ENCODE measurements at regions of chr19 and their contacts with region 1.

Region 1: DNA sequence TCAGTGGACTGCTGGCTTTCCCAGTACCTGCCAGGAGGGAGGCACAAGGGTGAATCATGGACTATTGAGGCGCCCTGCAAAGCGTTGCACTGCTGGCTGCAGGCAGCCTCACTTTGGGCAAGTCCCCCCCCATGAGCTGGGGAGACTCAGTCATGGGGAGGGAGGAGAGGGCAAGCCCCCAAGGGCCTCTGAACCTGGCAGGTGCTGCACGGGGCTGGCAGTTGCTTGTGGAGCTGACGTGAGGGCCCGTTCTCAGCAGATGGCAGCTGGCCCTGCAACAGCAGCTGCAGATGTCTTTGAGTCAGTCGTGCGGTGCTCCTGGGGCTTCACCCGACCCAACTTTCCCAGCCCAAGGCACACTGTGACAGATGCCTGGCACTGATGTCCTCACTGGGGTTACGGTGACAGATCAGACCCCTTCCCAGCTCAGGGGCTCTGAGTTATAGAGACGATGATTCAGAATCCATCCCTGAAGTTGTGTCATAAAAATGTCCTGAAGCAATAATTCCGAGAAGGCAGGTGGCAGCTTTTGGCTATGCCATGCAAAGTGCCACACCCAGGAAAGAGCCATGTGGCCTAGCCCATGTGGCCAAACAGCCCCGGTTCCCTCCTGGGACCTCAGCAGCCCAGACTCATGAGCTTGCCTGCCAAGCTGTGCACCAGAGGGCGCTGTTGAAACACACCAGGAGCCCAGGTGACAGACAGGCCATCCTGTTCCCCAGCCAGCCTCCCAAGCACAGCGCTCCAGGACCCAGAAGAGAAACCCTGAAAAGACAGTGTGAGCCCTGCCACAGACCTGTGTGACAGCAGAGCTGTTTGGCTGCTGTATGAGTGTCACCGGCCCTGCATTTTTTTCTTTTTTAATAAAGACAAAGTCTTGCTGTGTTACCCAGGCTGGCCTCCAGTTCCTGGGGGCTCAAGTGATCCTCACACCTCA is 53.6 kb upstream of the LDLR start:
- DNase-seq: peak; percentile 91
- H3K4me3 Mint-ChIP-seq: no peak overlapping the region
- H3K27ac Mint-ChIP-seq: no peak overlapping the region
- H3K4me1 Mint-ChIP-seq: peaks cover 6% of the 10 kb centered on the region
- H3K27me3 Mint-ChIP-seq: no peaks in the 10 kb centered on the region

Region 2: DNA sequence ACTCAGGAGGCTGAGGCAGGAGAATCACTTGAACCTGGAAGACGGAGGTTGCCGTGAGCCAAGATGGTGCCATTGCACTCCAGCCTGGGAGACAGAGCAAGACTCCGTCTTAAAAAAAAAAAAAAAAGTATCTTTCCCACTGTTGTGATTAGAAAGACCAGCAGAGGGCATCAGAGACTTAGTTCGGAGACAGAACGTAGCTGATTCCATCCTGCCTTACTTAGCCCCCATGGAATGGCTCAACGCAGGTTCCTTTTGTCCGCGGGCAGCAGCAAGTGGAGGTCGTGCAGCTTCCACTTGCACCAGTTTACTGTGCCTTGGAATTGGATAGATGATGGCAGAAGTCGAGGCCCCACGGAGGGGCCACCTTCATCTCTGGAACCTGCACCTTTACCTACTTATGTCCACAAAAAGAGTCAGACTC is 99.0 kb before region 1 on chr19:
- CTCF ChIA-PET with region 1: interaction called, 32 read pairs
- POLR2A ChIA-PET with region 1: no interaction called
- intact Hi-C with region 1: loop called (anchors 2 kb)
- DNase-seq: peak; percentile 29
- H3K4me3 Mint-ChIP-seq: peak overlapping the region; percentile 12
- H3K27ac Mint-ChIP-seq: no peak overlapping the region
- H3K4me1 Mint-ChIP-seq: peaks cover 2% of the 10 kb centered on the region
- H3K27me3 Mint-ChIP-seq: no peaks in the 10 kb centered on the region

Region 3: DNA sequence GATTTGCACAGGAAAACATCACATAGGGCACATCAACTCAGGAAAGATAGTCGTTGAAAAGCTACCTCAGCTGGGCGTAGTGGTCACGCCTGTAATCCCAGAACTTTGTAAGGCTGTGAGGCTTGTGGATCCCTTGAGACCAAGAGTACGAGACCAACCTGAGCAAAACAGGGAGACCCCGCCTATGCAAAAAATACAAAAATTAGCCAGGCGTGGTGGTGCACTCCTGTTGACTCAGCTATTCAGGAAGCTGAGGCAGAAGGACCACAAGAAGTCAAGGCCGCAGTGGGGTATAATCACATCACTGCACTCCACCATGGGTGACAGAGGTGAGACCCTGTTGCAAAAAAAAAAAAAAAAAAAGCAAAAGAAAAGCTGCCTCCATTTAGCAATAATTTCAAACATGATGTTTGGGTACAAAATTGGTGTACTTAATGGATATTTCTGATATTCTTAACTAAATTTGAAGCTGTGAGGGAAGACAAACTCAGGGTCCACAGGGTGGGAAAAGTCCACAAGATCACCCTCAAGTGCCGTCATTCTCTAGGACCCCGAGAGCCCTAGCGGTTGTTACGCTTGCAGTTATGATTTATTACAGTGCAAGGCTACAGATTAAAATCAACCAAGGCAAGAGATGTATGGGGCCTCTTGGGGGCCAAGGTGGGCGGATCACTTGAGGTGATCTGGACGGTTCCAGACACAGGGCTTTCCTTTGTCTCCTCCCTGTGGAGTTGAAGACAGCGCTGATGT is 11.1 kb after region 1 on chr19:
- CTCF ChIA-PET with region 1: interaction called, 19 read pairs
- POLR2A ChIA-PET with region 1: no interaction called
- intact Hi-C with region 1: no loop called
- DNase-seq: no peak
- H3K4me3 Mint-ChIP-seq: no peak overlapping the region
- H3K27ac Mint-ChIP-seq: no peak overlapping the region
- H3K4me1 Mint-ChIP-seq: peaks cover 34% of the 10 kb centered on the region
- H3K27me3 Mint-ChIP-seq: no peaks in the 10 kb centered on the region

Region 4: DNA sequence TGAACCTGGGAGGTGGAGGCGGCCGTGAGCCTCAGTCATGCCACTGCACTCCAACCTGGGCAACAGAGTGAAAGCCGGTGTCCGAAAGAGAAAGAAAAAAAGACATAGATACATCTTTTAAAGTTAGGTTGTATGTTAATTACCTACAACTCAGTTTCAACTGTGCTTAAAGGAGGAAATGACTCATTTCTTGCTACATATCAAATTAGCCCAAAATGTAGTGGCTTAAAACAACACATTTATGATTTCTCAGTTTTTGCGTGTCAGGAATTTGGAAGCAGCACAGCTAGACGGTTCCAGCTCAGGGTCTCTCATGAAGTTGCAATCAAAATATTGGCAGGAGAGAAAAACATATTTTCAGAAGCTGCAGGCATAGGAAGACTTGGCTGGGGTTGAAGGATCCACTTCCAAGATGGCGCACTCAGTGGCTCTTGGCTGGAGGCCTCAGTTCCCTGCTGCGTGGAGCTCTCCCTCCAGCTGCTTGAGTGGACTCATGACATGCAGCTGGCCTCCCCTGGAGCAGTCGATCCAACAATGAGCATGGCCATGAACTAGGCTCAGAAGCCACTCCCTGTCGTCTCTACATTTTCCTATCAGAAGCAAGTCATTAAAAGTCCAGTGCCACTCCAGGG is 60.6 kb after region 1 on chr19:
- CTCF ChIA-PET with region 1: interaction called, 16 read pairs
- POLR2A ChIA-PET with region 1: interaction called, 3 read pairs
- intact Hi-C with region 1: loop called (anchors 1 kb)
- DNase-seq: peak; percentile 70
- H3K4me3 Mint-ChIP-seq: peak overlapping the region; percentile 50
- H3K27ac Mint-ChIP-seq: peak overlapping the region; percentile 86
- H3K4me1 Mint-ChIP-seq: peaks cover 58% of the 10 kb centered on the region
- H3K27me3 Mint-ChIP-seq: no peaks in the 10 kb centered on the region

Region 5: DNA sequence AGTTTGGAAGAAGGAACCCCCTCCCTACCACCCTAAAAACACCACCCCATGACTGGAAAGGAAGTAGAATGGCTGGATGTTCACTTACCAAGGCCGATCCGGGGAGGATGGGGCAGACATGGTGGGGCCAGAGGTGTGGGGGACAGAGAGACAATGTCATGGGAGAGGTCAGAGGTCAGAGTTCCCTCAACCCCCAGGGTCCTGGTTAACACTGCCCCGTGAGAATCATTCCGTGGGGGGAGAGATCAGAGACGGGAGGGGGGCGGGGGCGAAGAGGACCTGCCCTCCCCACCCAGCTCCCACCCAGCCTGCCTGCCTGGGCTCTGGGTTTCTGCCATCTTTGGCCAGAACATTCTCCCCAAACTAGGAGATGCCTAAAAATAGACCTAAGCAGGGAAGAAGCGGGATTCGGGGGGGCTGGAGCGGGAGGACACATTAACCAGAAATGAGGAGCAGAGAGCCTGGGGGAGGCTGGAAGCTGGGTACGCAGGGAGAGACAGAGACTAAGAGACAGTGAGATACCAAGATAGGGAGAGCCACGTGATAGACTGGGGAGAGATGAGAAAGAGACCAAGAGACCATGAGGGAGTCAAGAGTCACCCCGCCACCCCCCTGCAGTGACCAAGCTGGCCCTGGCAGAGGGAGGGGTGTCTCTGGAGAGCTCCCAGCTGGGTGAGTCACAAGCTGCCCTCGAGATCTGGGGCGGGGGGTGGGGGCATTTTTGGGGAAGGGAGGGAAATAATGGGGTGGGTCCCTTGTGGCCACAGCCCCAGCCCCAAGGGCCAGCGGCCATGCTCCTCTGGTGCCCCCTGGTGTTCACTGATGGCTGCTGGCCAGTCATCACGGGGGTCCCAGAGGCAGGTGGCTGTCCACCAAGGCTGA is 167.7 kb after region 1 on chr19:
- CTCF ChIA-PET with region 1: interaction called, 9 read pairs
- POLR2A ChIA-PET with region 1: no interaction called
- intact Hi-C with region 1: loop called (anchors 5 kb)
- DNase-seq: peak; percentile 46
- H3K4me3 Mint-ChIP-seq: no peak overlapping the region
- H3K27ac Mint-ChIP-seq: no peak overlapping the region
- H3K4me1 Mint-ChIP-seq: no peaks in the 10 kb centered on the region
- H3K27me3 Mint-ChIP-seq: peaks cover 3% of the 10 kb centered on the region